ENCODE measurements at regions of chr1 and their contacts with region 1.

Region 1: GRCh38 chr1:108643492-108644335 is 17.2 kb downstream of the HENMT1 start:
- DNase-seq: peak; percentile 40
- H3K4me3 Mint-ChIP-seq: no peak overlapping the region
- H3K27ac Mint-ChIP-seq: peak overlapping the region; percentile 97
- H3K4me1 Mint-ChIP-seq: peaks cover 69% of the 10 kb centered on the region
- H3K27me3 Mint-ChIP-seq: no peaks in the 10 kb centered on the region

Region 2: GRCh38 chr1:108199781-108200570 is 443.7 kb before region 1 on chr1 and contains the start of gene SLC25A24:
- intact Hi-C with region 1: loop called (anchors 5 kb)
- DNase-seq: peak; percentile 84
- H3K4me3 Mint-ChIP-seq: peak within 1 kb of the TSS; percentile 89
- H3K27ac Mint-ChIP-seq: peak within 1 kb of the TSS; percentile 75
- H3K4me1 Mint-ChIP-seq: peaks cover 37% of the 10 kb centered on the region
- H3K27me3 Mint-ChIP-seq: peaks cover 5% of the 10 kb centered on the region
- total RNA-seq, gene SLC25A24: 27.5 and 28.0 TPM in 2 replicates

Region 3: DNA sequence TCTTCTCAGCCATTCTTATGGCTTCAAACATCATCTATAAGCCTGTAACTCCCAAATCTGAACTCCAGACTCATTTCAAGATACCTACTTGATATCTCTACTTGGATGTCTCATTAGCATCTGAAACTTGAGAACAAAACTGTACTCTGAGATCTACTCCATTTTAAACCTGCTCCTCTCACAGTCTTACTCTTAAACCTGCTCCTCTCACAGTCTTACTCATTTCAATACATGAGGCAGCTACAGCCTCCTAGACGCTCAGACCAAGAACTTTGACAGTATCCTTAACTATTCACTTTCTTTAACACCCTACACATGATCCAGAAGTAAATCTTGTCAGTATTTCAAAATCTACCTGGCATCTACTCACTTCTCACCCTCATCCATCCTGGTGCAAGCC is 139.3 kb before region 1 on chr1:
- intact Hi-C with region 1: loop called (anchors 2 kb)
- DNase-seq: no peak
- H3K4me3 Mint-ChIP-seq: no peak overlapping the region
- H3K27ac Mint-ChIP-seq: no peak overlapping the region
- H3K4me1 Mint-ChIP-seq: peaks cover 2% of the 10 kb centered on the region
- H3K27me3 Mint-ChIP-seq: peaks cover 38% of the 10 kb centered on the region

Region 4: DNA sequence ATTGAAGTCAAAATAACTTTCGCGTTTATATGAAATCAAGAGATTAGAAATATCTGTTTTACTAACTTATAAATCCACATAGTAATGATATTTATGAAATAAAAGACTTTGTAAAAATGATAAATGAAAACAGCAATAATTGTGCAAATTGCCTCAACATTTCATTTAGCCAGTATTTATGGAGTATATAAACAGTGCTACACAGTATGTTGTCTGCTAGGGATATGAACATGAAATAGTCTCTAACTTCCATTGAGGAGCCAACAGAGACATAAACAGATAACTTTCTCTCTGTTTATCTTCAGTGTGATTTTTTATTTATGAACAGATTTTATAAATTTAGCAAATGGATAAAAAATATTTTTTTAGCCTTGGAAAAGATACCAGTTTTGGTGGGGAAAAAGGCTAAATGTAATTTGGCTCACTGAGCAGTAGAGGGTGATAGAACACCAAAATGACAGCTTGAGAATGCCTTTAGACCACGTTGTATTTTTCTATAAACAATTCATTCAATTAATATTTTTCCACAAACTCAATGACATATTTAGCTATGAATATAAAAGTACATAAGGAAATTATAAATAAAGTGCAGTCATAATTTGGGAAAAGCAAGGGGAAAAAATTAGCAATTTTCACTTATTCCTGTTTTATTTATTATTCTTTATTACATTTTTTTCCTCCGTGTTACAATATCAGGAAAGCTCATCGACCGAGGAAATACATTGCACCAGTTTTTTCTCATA is 131.3 kb before region 1 on chr1:
- intact Hi-C with region 1: loop called (anchors 1 kb)
- DNase-seq: no peak
- H3K4me3 Mint-ChIP-seq: no peak overlapping the region
- H3K27ac Mint-ChIP-seq: no peak overlapping the region
- H3K4me1 Mint-ChIP-seq: peaks cover 7% of the 10 kb centered on the region
- H3K27me3 Mint-ChIP-seq: peaks cover 36% of the 10 kb centered on the region

Region 5: GRCh38 chr1:108559215-108560186 is 84.2 kb before region 1 on chr1 and contains the start of gene EEIG2:
- intact Hi-C with region 1: loop called (anchors 2 kb)
- DNase-seq: peak; percentile 87
- H3K4me3 Mint-ChIP-seq: peak within 1 kb of the TSS; percentile 95
- H3K27ac Mint-ChIP-seq: peak within 1 kb of the TSS; percentile 77
- H3K4me1 Mint-ChIP-seq: peaks cover 40% of the 10 kb centered on the region
- H3K27me3 Mint-ChIP-seq: peaks cover 4% of the 10 kb centered on the region
- total RNA-seq, gene EEIG2: 25.4 and 26.4 TPM in 2 replicates

Region 6: DNA sequence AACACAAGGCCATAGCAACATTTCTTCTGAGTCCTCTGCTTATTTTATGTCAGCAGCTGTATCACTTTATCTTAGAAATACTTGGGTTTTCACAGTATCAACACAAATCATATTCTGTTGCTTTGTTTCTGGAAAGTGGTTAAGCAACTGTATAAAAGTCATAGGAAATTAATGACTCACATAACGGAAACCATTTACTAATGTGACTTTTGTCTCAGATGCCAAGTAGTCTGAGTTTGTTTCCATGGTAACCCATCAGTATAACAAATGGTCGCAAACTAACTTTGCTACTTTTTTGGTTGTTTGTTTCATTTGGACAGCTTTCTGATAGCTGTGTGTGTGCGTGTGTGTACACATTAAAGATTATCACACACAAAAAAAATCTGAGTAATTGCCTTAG is 52.8 kb before region 1 on chr1:
- intact Hi-C with region 1: loop called (anchors 2 kb)
- DNase-seq: peak; percentile 15
- H3K4me3 Mint-ChIP-seq: no peak overlapping the region
- H3K27ac Mint-ChIP-seq: peak overlapping the region; percentile 14
- H3K4me1 Mint-ChIP-seq: peaks cover 60% of the 10 kb centered on the region
- H3K27me3 Mint-ChIP-seq: no peaks in the 10 kb centered on the region

Region 7: GRCh38 chr1:108661030-108661620 is 17.4 kb after region 1 on chr1 and contains the start of gene HENMT1:
- intact Hi-C with region 1: loop called (anchors 1 kb)
- DNase-seq: peak; percentile 76
- H3K4me3 Mint-ChIP-seq: peak within 1 kb of the TSS; percentile 85
- H3K27ac Mint-ChIP-seq: peak within 1 kb of the TSS; percentile 95
- H3K4me1 Mint-ChIP-seq: peaks cover 40% of the 10 kb centered on the region
- H3K27me3 Mint-ChIP-seq: no peaks in the 10 kb centered on the region
- total RNA-seq, gene HENMT1: 16.5 and 17.7 TPM in 2 replicates

Region 8: GRCh38 chr1:108758796-108759195 is 115.1 kb after region 1 on chr1:
- intact Hi-C with region 1: no loop called
- DNase-seq: no peak
- H3K4me3 Mint-ChIP-seq: no peak overlapping the region
- H3K27ac Mint-ChIP-seq: no peak overlapping the region
- H3K4me1 Mint-ChIP-seq: peaks cover 2% of the 10 kb centered on the region
- H3K27me3 Mint-ChIP-seq: no peaks in the 10 kb centered on the region

Measured in activated T-helper 2 cell treated with anti-CD3 and anti-CD28 coated beads, Interferon-gamma antibody, Interleukin-2, Interleukin-4, amounts not matched to agents 10 μg/mL and 5 μg/mL and 100 μg/mL, durations not matched to agents 14 hours and 24 hours and 36 hours (primary cell).